Aorta (tissue), 5 donors: ENCODE measurements at regions of chr14 and their contacts with region 1.

Region 1: GRCh38 chr14:60622917-60623257 is 26.4 kb downstream of the SIX1 start:
- DNase-seq: no peak
- ATAC-seq: peak; percentile 75
- H3K4me3 ChIP-seq: no peak overlapping the region
- H3K27ac ChIP-seq: no peak overlapping the region
- H3K4me1 ChIP-seq: no peaks in the 10 kb centered on the region
- H3K27me3 ChIP-seq: no peaks in the 10 kb centered on the region

Region 2: GRCh38 chr14:61252369-61253063 is 629.6 kb after region 1 on chr14:
- intact Hi-C with region 1: loop called (anchors 1 to 2 kb)
- DNase-seq: peak in 1 of 2 donors; percentile 83
- ATAC-seq: peak; percentile 94
- H3K4me3 ChIP-seq: no peak overlapping the region
- H3K27ac ChIP-seq: no peak overlapping the region
- H3K4me1 ChIP-seq: no peaks in the 10 kb centered on the region
- H3K27me3 ChIP-seq: no peaks in the 10 kb centered on the region